CD8-positive, alpha-beta T cell (primary cell): ENCODE measurements at regions of chr15 and their contacts with region 1.

Region 1: DNA sequence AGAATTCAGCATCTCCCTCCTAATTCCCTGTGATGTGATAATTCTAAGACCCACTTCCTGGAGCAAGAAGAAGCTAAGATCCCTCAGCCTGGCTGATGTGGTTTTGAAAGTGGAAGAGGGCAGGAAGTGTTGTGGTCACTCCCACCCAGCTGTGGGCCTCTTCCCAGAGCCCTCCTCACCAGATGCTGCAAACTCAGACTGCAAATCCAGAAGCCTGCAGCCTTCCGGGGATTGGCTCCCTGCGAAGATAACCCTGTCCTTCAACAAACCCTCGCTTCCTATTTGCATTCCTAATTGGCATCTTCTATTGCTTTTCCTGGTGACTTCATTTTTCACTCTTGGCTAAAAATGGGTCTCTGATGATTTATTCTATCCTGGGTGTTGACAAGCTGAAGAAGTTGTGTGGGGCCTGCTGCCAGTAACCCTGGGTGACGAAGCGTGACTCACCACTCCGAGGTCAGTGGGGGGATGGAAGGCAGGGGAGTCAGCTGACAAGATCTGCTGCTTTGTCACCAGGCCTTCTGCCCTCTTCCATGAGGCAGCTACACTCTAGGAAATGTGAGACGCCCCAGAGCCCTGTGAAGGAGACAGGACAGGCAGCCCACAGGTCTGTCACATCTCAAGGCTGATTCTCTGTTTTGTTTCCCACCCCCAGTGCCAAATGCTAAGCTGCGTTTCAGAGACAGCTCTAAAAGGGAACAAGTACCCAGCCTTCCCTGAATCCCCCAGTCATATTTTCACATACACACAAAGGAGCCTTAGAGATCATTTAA is 99.7 kb upstream of the LIPC start:
- DNase-seq: peak; percentile 46 to 88 (median 79)
- ATAC-seq: peak; percentile 95
- H3K4me3 ChIP-seq: no peak overlapping the region
- H3K4me3 Mint-ChIP-seq: no peak overlapping the region
- H3K27ac ChIP-seq: peak overlapping the region; percentile 17 to 63
- H3K27ac Mint-ChIP-seq: peak overlapping the region; percentile 83
- H3K4me1 ChIP-seq: peaks cover 23% of the 10 kb centered on the region
- H3K4me1 Mint-ChIP-seq: peaks cover 32% of the 10 kb centered on the region
- H3K27me3 ChIP-seq: no peaks in the 10 kb centered on the region
- H3K27me3 Mint-ChIP-seq: peaks cover under 1% of the 10 kb centered on the region
- CTCF ChIP-seq: no peak

Region 2: GRCh38 chr15:58269455-58270414 is 62.4 kb before region 1 on chr15:
- CTCF ChIA-PET with region 1: no interaction called
- POLR2A ChIA-PET with region 1: no interaction called
- intact Hi-C with region 1: no loop called
- DNase-seq: peak in 6 of 9 experiments; percentile 11 to 68 (median 35)
- ATAC-seq: no peak
- H3K4me3 ChIP-seq: no peak overlapping the region
- H3K4me3 Mint-ChIP-seq: no peak overlapping the region
- H3K27ac ChIP-seq: no peak overlapping the region
- H3K27ac Mint-ChIP-seq: no peak overlapping the region
- H3K4me1 ChIP-seq: peaks cover 4% of the 10 kb centered on the region
- H3K4me1 Mint-ChIP-seq: peaks cover 9% of the 10 kb centered on the region
- H3K27me3 ChIP-seq: no peaks in the 10 kb centered on the region
- H3K27me3 Mint-ChIP-seq: no peaks in the 10 kb centered on the region
- CTCF ChIP-seq: peak; percentile 33

Region 3: DNA sequence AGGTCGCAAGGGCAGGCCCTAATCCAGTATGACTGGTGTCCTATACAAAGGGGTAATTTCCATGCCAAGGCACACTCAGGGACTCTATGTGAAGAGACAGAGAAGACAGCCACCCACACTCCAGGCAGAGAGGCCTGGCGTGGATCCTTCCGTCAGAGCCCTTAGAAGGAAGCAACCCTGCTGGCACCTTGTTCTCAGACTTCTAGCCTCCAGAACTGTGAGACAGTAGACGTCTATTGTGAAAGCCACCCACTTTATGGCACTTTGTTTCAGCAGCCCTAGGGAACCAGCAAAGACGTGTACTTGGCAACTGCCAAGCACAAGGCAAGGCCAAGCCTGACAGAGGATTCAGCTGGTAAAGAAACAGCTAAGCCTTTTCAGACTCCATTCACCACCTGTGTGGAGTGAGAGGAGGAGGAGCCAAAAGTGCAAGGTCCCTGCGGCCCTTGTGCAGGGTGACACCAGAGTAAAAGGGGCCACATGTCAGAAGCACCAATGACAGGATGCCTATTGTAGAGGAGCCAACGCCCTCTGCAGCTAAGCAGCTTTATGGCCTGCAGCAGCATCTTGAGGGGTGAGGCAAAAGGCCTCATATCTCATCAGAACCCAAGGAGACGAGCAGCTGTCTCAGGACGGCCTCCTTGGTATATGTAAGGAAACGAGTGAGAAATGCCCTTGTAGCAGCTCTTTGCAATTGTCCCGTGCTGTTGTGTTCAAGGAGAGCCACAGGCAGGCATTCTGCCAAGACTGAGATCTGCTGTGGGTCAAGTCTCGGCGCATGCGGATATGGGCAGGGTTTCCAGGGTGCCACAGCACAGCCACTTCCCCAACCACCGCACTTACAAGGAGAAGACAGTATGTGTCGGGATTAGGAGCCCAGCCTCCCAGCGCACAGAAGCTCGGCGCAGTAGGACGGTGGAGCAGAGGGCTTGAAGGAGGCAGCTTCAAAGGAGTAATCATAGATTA is 21.8 kb before region 1 on chr15:
- CTCF ChIA-PET with region 1: interaction called, 3 read pairs
- POLR2A ChIA-PET with region 1: no interaction called
- intact Hi-C with region 1: loop called in 1 of 2 experiments (anchors 1 kb)
- DNase-seq: no peak
- ATAC-seq: no peak
- H3K4me3 ChIP-seq: no peak overlapping the region
- H3K4me3 Mint-ChIP-seq: no peak overlapping the region
- H3K27ac ChIP-seq: no peak overlapping the region
- H3K27ac Mint-ChIP-seq: no peak overlapping the region
- H3K4me1 ChIP-seq: peaks cover 20% of the 10 kb centered on the region
- H3K4me1 Mint-ChIP-seq: peaks cover 29% of the 10 kb centered on the region
- H3K27me3 ChIP-seq: no peaks in the 10 kb centered on the region
- H3K27me3 Mint-ChIP-seq: no peaks in the 10 kb centered on the region
- CTCF ChIP-seq: no peak